MCF 10A (cell line): ENCODE measurements at regions of chr10 and their contacts with region 1.

Region 1: DNA sequence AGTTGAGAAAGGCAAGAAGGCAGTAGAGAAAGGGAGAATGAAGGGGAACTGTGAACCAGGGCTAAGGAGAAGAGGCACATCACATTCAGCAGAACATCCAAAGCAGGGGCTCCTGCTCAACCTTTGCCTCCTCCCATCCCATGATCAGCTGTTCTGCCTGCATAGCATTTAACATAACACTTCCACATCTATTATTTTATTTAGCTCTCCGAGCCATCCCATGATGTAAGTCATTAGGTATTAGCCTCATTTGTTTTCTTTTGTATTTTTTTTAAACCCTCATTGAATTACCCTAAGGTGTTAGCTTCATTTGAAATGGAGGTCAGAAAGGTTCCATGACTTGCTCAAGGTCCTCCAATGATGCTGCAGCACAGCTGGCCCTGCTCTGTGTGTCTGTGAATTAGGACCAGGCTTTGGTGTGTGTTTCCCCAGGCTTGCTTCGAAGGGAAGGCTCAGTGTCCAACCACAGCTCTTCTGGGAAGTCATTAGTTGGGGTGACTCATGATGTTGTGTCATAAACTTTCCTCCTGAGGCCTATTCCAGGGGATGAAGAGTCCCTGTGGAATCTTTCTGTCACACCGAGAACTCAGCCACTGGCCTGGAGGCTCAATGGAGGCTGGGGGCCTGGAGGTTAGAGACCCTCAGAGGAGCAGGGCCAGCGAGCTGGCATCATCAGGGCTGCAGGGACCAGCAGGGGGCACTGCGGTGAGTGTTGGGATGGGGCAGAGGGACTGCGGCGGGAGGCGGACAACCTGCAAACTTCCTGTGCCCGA is 16.5 kb downstream of the NPFFR1 start:
- DNase-seq: peak; percentile 95
- H3K4me3 Mint-ChIP-seq: peak overlapping the region; percentile 3
- H3K27ac Mint-ChIP-seq: peak overlapping the region; percentile 92
- H3K4me1 Mint-ChIP-seq: peaks cover 30% of the 10 kb centered on the region
- H3K27me3 Mint-ChIP-seq: no peaks in the 10 kb centered on the region
- CTCF ChIP-seq: peak; percentile 43

Region 2: GRCh38 chr10:70093335-70093944 is 173.9 kb before region 1 on chr10:
- CTCF ChIA-PET with region 1: no interaction called
- POLR2A ChIA-PET with region 1: no interaction called
- intact Hi-C with region 1: no loop called
- DNase-seq: no peak
- H3K4me3 Mint-ChIP-seq: no peak overlapping the region
- H3K27ac Mint-ChIP-seq: no peak overlapping the region
- H3K4me1 Mint-ChIP-seq: no peaks in the 10 kb centered on the region
- H3K27me3 Mint-ChIP-seq: no peaks in the 10 kb centered on the region
- CTCF ChIP-seq: no peak

Region 3: DNA sequence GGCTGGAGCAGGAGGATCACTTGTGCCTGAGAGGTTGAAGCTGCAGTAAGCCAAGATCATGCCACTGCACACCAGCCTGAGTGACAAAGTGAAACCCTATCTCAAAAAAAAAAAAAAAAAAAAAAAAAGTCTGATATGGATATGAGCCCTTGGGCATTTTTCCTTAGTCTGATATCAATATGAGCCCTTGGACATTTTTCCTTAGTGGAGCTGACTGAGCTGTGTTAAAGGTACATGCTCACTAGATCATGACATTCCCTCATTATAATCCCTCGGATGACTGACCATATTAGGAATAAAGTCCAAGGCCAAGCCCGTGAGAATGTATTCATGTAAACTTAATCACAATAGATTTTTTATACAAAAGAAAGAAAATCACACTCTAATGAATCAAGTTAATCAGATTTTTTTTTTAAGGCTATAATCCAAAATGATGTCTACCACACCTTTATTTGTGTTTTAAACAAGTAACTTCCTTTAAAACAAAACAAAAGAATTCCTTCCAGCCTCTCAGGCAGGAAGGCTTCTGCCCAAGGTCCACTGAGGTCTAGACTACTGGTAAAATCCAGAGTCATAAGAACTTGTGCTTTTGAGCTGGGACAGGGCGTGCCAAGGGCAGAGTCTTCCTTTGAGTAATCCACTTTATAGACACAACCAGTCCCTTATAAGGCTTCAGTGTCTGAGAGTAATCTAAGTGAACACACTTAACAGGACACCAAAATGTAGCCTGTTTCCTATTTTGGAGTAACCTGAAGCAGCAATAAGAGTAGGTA is 39.6 kb before region 1 on chr10:
- CTCF ChIA-PET with region 1: interaction called, 4 read pairs
- POLR2A ChIA-PET with region 1: interaction called, 43 read pairs
- intact Hi-C with region 1: loop called (anchors 1 kb)
- DNase-seq: peak; percentile 16
- H3K4me3 Mint-ChIP-seq: peak overlapping the region; percentile 29
- H3K27ac Mint-ChIP-seq: peak overlapping the region; percentile 81
- H3K4me1 Mint-ChIP-seq: peaks cover 42% of the 10 kb centered on the region
- H3K27me3 Mint-ChIP-seq: no peaks in the 10 kb centered on the region
- CTCF ChIP-seq: no peak

Region 4: DNA sequence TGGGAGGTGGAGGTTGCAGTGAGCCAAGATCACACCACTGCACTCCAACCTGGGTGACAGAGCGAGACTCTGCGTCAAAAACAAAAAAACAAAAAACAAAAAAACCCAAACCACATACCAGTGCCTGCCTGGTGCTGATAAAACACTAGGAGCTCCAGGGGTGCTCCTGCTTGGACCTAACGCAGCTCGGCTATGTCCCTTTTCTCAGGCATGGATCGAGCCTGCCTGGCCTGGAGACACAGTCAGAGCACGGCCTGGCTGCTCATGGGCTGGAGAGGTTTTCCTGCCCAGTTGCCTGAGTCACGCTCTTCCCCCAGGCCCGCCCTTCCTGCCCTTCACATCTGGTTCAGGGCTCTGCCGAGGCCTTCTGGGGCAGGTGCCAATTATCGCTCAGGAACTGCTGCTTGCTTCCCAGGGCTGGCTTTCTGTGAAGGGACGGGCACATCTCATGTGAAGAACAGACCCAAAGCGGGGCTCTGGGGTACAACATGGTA is 29.1 kb after region 1 on chr10:
- CTCF ChIA-PET with region 1: interaction called, 3 read pairs
- POLR2A ChIA-PET with region 1: interaction called, 13 read pairs
- intact Hi-C with region 1: no loop called
- DNase-seq: peak; percentile 94
- H3K4me3 Mint-ChIP-seq: no peak overlapping the region
- H3K27ac Mint-ChIP-seq: peak overlapping the region; percentile 80
- H3K4me1 Mint-ChIP-seq: peaks cover 17% of the 10 kb centered on the region
- H3K27me3 Mint-ChIP-seq: no peaks in the 10 kb centered on the region
- CTCF ChIP-seq: no peak